ENCODE measurements at regions of chr1 and their contacts with region 1.

Region 1: GRCh38 chr1:205255941-205256780 is 28.4 kb downstream of the TMCC2 start:
- DNase-seq: peak; percentile 83
- H3K4me3 ChIP-seq: no peak overlapping the region
- H3K27ac ChIP-seq: no peak overlapping the region
- H3K4me1 ChIP-seq: peaks cover 3% of the 10 kb centered on the region
- H3K27me3 ChIP-seq: no peaks in the 10 kb centered on the region
- CTCF ChIP-seq: peak; percentile 79 to 92
- POLR2A ChIP-seq: no peak

Region 2: DNA sequence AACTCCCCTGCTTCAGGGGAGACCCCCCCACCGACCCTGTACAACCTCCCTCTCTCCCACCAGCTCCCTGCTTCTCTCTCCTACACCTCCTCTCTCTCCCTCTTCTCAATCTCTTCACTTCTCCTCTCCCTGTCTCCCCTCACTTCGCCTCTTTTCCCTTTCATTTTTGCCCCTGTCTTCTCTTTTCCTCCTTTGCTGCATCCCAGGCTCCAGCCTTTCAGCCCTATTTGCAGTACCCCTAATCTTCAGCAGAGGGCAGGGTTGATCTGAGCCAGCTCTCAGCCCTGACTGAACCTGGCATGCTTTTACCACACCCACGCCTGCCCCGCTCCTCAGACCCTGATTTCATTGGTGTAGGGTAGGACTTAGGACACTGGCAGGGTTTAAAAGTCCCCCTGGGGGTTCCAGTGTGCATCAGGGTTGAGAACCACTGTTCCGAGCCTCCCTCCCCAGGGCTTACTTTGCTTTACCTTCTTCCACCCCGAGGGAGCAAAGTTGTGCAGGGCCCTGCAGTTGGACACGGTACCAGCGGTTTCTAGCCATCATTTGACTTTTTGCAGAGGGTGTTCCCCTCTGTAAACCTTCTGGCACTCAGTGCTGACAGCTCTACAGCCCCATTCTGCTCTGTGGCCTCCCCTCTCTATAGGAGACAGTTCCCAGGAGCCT is 280.5 kb before region 1 on chr1:
- CTCF ChIA-PET with region 1: interaction called, 45 read pairs
- POLR2A ChIA-PET with region 1: no interaction called
- dilution Hi-C with region 1: no loop called
- intact Hi-C with region 1: loop called (anchors 1 kb)
- DNase-seq: peak; percentile 31
- H3K4me3 ChIP-seq: no peak overlapping the region
- H3K27ac ChIP-seq: no peak overlapping the region
- H3K4me1 ChIP-seq: peaks cover 14% of the 10 kb centered on the region
- H3K27me3 ChIP-seq: peaks cover 0 to 2% of the 10 kb centered on the region in 2 experiments
- CTCF ChIP-seq: peak; percentile 62 to 73
- POLR2A ChIP-seq: no peak

Region 3: DNA sequence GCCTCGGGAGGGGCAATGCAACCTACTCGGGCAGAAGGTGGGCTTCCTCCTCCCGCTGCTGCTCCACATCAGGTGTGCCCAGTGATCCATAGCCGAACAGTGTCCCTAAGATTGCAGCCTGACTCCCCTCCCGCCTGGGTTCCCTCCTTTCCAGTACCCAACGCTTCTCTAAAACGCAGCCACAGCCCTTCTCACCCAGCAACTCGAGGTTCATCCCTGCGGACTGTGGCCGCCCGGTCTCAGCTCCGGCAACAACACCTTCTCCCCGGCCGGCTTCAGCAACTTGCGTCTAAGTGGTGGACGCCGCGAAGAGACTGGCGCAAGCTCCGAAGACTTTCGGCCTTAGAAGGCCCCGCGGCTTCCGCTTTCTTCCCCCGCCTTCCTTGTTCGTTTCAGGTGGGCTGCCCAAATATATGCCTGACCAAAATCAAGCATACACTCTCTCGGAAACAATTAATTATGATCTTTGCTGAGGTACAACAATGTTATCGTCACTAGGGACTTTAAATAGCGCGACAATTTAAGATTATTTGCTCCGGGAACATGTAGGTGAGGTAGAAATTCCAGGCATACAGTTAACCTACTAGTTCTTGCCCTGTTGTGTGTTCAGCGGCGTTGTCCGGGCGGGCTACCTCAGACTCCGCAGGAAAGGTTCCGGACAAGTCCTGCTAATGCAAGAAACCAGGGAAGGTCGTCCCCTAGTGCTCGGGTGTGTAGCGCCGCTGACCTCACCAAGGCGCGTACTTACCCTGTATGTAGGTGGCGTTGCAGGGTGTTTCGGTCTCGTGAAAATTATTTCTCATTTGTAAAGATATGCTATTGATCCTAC is 134.3 kb before region 1 on chr1 and contains the start of gene RBBP5:
- CTCF ChIA-PET with region 1: interaction called, 23 read pairs
- POLR2A ChIA-PET with region 1: no interaction called
- dilution Hi-C with region 1: no loop called
- intact Hi-C with region 1: loop called (anchors 1 kb)
- DNase-seq: peak; percentile 98
- H3K4me3 ChIP-seq: peak within 1 kb of the TSS; percentile 52 to 90 (median 72)
- H3K27ac ChIP-seq: peak within 1 kb of the TSS; percentile 91
- H3K4me1 ChIP-seq: peaks cover 12% of the 10 kb centered on the region
- H3K27me3 ChIP-seq: no peaks in the 10 kb centered on the region
- CTCF ChIP-seq: peak; percentile 71 to 77
- POLR2A ChIP-seq: peak; percentile 85
- total RNA-seq, gene RBBP5: 14.2 and 15.6 TPM in 2 replicates

Region 4: GRCh38 chr1:205211169-205211838 is 44.9 kb before region 1 on chr1 and contains the start of gene DSTYK:
- CTCF ChIA-PET with region 1: no interaction called
- POLR2A ChIA-PET with region 1: no interaction called
- dilution Hi-C with region 1: no loop called
- intact Hi-C with region 1: loop called (anchors 1 kb)
- DNase-seq: peak; percentile 95
- H3K4me3 ChIP-seq: peak within 1 kb of the TSS; percentile 81 to 90 (median 89)
- H3K27ac ChIP-seq: peak within 1 kb of the TSS; percentile 14
- H3K4me1 ChIP-seq: peaks cover 7% of the 10 kb centered on the region
- H3K27me3 ChIP-seq: peaks cover 9 to 15% of the 10 kb centered on the region in 2 experiments
- CTCF ChIP-seq: no peak
- POLR2A ChIP-seq: peak; percentile 54
- total RNA-seq, gene DSTYK: 8.1 and 8.7 TPM in 2 replicates

Region 5: GRCh38 chr1:205266611-205267305 is 10.6 kb after region 1 on chr1:
- CTCF ChIA-PET with region 1: interaction called, 28 read pairs
- POLR2A ChIA-PET with region 1: no interaction called
- dilution Hi-C with region 1: no loop called
- intact Hi-C with region 1: no loop called
- DNase-seq: no peak
- H3K4me3 ChIP-seq: no peak overlapping the region
- H3K27ac ChIP-seq: no peak overlapping the region
- H3K4me1 ChIP-seq: peaks cover 36% of the 10 kb centered on the region
- H3K27me3 ChIP-seq: no peaks in the 10 kb centered on the region
- CTCF ChIP-seq: no peak
- POLR2A ChIP-seq: no peak

Region 6: GRCh38 chr1:205321164-205321958 is 65.2 kb after region 1 on chr1 and contains the start of gene NUAK2:
- CTCF ChIA-PET with region 1: interaction called, 22 read pairs
- POLR2A ChIA-PET with region 1: no interaction called
- dilution Hi-C with region 1: no loop called
- intact Hi-C with region 1: no loop called
- DNase-seq: peak; percentile 89
- H3K4me3 ChIP-seq: peak within 1 kb of the TSS; percentile 58 to 68 (median 65)
- H3K27ac ChIP-seq: no peak within 1 kb of the TSS
- H3K4me1 ChIP-seq: peaks cover 18% of the 10 kb centered on the region
- H3K27me3 ChIP-seq: peaks cover 0 to 3% of the 10 kb centered on the region in 2 experiments
- CTCF ChIP-seq: peak; percentile 8 to 43
- POLR2A ChIP-seq: no peak
- total RNA-seq, gene NUAK2: 2.3 and 2.5 TPM in 2 replicates

Region 7: DNA sequence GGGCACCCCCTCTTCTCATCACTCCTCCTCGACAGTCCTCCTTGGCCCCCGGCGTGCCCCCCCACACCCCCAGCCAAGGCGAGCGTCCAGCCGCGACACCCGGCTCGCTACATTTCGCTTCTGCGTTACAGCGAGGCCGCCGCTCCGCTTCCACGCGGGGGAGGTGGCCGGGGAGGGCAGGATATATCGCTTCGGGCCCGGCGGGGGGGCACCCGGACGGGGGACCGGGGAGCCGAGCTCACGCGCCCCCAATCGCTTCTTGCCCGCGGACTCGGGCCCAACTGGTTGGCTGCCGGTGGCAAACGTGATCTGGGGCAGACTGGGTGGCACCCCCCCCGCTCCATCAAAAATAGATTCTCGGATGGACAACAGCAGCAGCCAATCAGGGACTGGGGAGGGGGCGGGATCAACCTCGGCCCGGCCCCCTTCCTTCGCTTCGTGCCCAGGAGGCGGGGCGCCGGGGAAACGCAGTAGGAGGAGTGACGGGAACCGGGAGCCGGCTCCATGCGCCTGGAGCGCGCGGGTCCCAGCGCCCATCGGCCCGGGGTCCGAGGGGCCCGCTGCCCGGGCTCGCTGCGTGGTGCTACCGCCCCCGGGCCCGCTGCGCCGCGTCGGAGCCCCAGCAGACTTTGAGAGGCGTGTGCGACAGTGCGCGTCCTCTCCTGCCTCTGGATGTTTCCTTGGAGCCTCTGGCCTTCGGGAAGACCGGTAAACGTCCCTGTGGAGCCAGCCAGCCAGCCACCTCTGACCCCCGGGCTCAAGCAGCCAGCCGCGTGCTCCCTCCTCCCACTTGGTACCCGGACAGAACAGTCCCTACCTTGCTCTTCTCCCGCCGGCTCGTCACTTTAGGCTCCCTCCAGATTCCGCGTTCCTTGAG is 557.0 kb after region 1 on chr1 and contains the start of gene SLC41A1:
- CTCF ChIA-PET with region 1: no interaction called
- POLR2A ChIA-PET with region 1: no interaction called
- dilution Hi-C with region 1: no loop called
- intact Hi-C with region 1: no loop called
- DNase-seq: peak; percentile 96
- H3K4me3 ChIP-seq: peak within 1 kb of the TSS; percentile 49 to 78 (median 76)
- H3K27ac ChIP-seq: peak within 1 kb of the TSS; percentile 45
- H3K4me1 ChIP-seq: peaks cover 10% of the 10 kb centered on the region
- H3K27me3 ChIP-seq: no peaks in the 10 kb centered on the region
- CTCF ChIP-seq: no peak
- POLR2A ChIP-seq: peak; percentile 41
- total RNA-seq, gene SLC41A1: 21.7 and 23.6 TPM in 2 replicates

Measured in endothelial cell of umbilical vein (primary cell).